ENCODE measurements at regions of chr10 and their contacts with region 1.

Region 1: DNA sequence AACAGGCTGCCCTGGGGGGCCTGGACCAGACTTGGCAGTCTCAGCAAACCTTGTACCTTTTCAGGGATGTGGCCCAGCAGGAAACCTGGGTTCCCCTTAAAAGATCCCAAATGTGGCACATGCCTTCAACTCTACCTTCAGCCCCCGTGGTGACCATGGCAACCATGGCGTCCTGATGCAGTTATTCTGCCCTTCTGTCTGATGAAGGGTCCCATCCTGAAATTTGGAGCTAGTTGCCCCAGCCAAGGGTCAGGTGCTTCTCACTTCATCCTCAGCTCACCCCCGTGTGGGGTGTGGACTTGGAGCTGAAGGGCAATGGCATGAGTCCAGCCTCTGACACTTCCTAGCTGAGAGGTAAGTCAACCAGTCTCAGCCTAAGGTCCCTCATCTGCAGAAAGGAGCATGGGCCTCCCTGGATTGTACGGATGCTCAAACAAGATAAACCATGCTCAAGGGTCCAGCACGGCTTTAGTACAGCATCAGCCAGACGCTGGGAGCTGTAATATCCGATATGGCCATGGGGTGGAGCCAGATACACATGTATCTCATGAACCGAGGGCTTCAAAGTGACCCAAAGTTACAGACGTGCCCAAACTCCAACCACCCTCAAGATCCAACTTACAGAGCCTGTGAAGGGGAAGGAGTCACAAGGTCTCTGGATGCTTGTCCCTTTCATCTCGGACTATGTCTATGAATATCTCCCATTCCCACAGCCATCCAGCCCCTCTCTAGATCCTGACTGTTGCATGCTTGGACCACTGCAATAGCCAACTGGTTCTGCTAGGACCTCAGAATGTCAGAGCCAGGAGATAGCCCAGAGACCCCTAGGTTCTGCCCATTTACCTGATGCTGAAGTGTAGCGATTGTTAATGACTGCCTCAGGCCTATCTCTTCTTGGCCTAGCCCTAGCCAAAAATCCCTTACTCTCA is 142.5 kb downstream of the SH3PXD2A start:
- DNase-seq: peak in 2 of 3 donors; percentile 61 to 79
- ATAC-seq: peak; percentile 87 to 95 (median 94)
- H3K4me3 ChIP-seq: no peak overlapping the region
- H3K27ac ChIP-seq: no peak overlapping the region
- H3K4me1 ChIP-seq: no peaks in the 10 kb centered on the region
- H3K27me3 ChIP-seq: no peaks in the 10 kb centered on the region
- CTCF ChIP-seq: peak; percentile 82 to 98 (median 86)
- POLR2A ChIP-seq: no peak

Region 2: DNA sequence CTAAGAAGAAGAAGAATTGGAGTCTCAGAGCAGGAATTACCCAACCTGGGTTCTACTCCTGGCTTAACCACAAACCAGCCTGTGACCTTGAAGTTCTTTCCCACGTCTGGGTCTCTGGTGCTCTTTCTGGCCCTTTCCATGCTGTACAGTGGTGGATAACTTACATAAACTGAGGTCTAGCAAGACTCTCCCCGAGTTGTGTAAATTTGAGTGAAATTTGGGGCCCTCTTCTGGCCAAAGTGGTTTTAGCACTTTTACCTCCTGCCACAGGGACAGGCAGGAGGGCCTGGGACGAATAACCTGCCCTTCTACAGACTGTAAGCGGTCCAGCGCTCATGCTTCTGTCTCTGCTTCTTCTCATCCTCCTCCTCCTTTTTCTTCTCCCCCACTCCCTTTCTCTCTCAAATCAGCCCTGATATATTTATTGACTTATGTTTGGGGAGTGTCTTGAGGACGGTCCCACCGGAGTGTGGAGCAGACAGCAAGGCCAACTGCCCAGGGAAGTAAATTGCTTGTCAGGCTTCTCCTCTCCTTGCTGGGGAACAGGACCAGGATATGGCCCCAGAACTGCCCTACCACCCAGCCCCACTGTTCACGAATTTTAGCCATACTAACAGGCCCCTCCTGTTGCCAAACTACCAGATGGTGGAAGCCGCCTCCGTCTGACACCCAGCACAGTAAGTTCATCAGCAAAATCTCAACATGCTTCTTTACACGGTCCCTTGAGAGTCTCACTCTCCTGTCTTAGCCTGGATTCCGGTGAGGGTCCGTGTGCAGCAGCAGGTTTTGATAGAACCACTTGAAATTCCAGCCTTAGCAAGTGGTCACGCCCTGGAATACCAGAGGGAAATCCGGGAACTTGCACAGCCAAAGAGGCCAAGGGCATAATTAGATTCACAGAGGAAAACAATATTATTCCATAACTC is 146.6 kb after region 1 on chr10:
- intact Hi-C with region 1: loop called (anchors 5 kb)
- DNase-seq: peak in 1 of 3 donors; percentile 65
- ATAC-seq: peak; percentile 54 to 65 (median 61)
- H3K4me3 ChIP-seq: no peak overlapping the region
- H3K27ac ChIP-seq: no peak overlapping the region
- H3K4me1 ChIP-seq: peaks cover 0 to 14% (median 3%) of the 10 kb centered on the region in 4 donors
- H3K27me3 ChIP-seq: no peaks in the 10 kb centered on the region
- CTCF ChIP-seq: peak; percentile 68 to 77 (median 74)
- POLR2A ChIP-seq: no peak

Region 3: DNA sequence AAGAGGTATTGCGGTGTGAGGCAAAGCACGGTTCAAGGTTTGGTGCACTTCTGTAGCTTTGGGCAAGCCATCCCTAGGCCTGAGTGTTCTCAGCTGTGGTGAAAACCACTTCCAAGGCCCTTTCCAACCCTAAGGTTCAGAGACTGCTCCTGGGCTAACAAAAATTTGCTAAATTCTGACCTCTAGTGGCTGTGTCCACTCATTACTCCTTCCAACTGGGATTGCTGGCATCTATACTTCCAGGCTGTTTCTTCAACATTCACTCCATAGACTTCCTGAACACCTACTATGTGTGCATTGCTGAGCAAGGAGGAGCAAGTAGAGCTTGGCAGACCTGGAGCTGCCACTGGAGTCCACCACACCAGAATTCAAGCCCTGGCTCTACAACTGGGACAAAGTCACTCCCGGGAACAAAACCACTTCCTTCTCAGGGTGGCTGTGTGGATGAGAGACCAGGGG is 171.9 kb after region 1 on chr10:
- intact Hi-C with region 1: loop called in 1 of 2 experiments (anchors 5 kb)
- DNase-seq: no peak
- ATAC-seq: peak; percentile 76 to 82 (median 79)
- H3K4me3 ChIP-seq: no peak overlapping the region
- H3K27ac ChIP-seq: no peak overlapping the region
- H3K4me1 ChIP-seq: peaks cover 0 to 13% (median 0%) of the 10 kb centered on the region in 4 donors
- H3K27me3 ChIP-seq: no peaks in the 10 kb centered on the region
- CTCF ChIP-seq: peak; percentile 66 to 79 (median 73)
- POLR2A ChIP-seq: no peak

Measured in right lobe of liver (tissue), 6 donors.